Naive thymus-derived CD4-positive, alpha-beta T cell (primary cell): ENCODE measurements at regions of chr7 and their contacts with region 1.

Region 1: GRCh38 chr7:35037526-35038339 is 448 bp upstream of the DPY19L1 start:
- DNase-seq: peak; percentile 64 to 93 (median 81)
- ATAC-seq: peak; percentile 83
- H3K4me3 ChIP-seq: peak overlapping the region; percentile 68
- H3K4me3 Mint-ChIP-seq: peak overlapping the region; percentile 77 to 96 (median 89)
- H3K27ac ChIP-seq: peak overlapping the region; percentile 61
- H3K27ac Mint-ChIP-seq: peak overlapping the region; percentile 11 to 90 (median 73)
- H3K4me1 ChIP-seq: peaks cover 17% of the 10 kb centered on the region in 2 donors
- H3K4me1 Mint-ChIP-seq: peaks cover 19 to 38% (median 30%) of the 10 kb centered on the region in 7 donors
- H3K27me3 ChIP-seq: no peaks in the 10 kb centered on the region
- H3K27me3 Mint-ChIP-seq: peaks cover 0 to 21% (median 0%) of the 10 kb centered on the region in 5 donors

Region 2: DNA sequence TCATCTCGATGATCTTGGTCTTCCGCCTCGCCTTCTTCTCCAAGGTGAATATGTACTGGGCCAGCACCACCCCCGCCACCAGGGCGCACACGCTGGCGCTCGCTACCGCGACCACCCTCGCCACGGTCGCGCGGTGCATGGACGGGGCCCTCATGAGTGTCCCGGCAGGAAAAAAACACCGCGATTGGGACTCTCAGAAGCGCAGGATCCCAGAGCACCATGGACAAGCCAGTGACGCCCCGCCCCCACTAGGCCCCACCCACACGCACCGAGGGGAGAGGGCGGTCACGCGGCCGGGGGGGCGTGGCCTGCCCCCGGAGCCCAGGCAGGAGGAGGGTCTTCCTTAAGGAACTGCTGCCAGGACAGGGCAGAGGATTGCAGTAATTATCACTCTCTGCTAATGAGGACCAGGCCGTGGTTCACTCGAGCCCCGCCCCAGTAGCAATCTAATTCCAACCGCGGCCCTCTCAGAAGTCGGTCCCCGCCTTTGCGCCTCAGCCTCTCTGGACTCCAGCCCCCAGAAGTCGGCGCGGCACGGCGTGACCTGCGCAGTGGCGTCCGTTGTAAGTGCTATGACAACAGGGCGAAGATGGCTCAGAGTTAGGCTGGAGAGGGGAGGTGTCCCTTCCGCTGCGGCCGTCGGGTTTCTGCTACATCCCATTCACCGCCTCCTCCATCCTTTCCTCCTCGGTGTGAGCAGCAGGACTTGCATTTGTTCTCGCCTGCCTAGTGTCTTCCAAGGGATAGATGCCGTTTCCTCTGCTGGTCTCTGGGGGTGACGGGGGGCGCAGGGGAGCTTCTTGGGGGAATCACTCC is 1908.5 kb before region 1 on chr7 and contains the start of gene BBS9:
- CTCF ChIA-PET with region 1: no interaction called
- POLR2A ChIA-PET with region 1: no interaction called
- intact Hi-C with region 1: loop called (anchors 2 to 10 kb)
- DNase-seq: peak; percentile 83 to 90 (median 88)
- ATAC-seq: peak; percentile 97
- H3K4me3 ChIP-seq: peak within 1 kb of the TSS; percentile 80
- H3K4me3 Mint-ChIP-seq: peak within 1 kb of the TSS; percentile 94 to 99 (median 97)
- H3K27ac ChIP-seq: peak within 1 kb of the TSS; percentile 78
- H3K27ac Mint-ChIP-seq: peak within 1 kb of the TSS; percentile 84 to 97 (median 91)
- H3K4me1 ChIP-seq: peaks cover 6 to 9% of the 10 kb centered on the region in 2 donors
- H3K4me1 Mint-ChIP-seq: peaks cover 13 to 36% (median 25%) of the 10 kb centered on the region in 7 donors
- H3K27me3 ChIP-seq: no peaks in the 10 kb centered on the region
- H3K27me3 Mint-ChIP-seq: peaks cover 0 to 18% (median 0%) of the 10 kb centered on the region in 5 donors
- total RNA-seq, gene BBS9: 11.7 to 31.0 (median 28.3) TPM

Region 3: DNA sequence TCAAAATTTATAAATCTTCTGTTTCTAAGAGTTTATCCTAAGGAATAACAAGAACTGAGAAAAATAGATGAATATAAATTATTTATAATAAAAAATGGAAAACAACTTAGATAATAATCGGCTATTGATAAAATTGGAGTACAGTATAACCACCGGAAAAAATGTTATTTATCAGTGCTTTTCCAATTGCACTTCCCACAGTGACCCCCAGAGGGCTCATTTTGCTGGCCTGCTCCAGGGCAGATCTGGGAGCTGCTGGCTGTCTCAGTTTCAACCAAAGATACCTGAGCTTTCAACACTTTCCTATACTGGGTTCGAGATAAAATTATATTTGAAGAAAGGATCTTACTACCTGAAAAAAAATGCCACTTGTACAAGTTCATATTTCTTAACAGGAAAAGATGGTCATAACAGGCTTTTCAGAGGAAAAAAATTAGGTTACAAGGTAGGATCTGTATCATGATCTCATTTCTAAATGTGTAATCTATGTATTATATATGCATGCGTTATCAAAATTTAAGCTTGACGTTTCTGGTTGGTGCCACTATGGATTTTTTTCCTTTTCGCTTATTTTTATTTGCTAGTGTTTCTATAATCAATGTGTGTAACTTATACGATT is 214.0 kb before region 1 on chr7:
- CTCF ChIA-PET with region 1: interaction called, 8 read pairs
- POLR2A ChIA-PET with region 1: interaction called, 3 read pairs
- intact Hi-C with region 1: loop called in 1 of 2 experiments (anchors 1 kb)
- DNase-seq: peak in 7 of 9 donors; percentile 5 to 43 (median 38)
- ATAC-seq: peak; percentile 67
- H3K4me3 ChIP-seq: no peak overlapping the region
- H3K4me3 Mint-ChIP-seq: no peak overlapping the region
- H3K27ac ChIP-seq: no peak overlapping the region
- H3K27ac Mint-ChIP-seq: no peak overlapping the region
- H3K4me1 ChIP-seq: no peaks in the 10 kb centered on the region
- H3K4me1 Mint-ChIP-seq: peaks cover 0 to 2% (median 0%) of the 10 kb centered on the region in 7 donors
- H3K27me3 ChIP-seq: no peaks in the 10 kb centered on the region
- H3K27me3 Mint-ChIP-seq: peaks cover 0 to 10% (median 4%) of the 10 kb centered on the region in 5 donors

Region 4: DNA sequence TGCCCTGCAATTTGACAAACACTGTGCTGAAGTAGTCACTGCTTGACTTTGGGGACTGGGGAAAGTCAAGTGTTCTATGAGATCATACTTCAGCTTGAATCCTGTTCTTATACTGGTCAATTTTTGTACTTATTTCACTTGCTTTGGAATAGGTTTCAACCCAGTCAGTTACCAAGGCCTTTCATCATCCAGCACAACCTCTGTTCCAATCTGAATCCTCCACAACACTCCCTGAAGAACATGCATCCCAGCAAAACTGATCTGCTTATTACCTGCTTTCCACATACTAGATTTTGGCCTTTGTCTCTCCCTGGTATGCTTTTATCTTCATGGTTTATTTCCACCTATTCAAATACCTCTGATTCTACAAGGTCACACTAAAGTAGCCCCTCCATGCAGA is 30.0 kb before region 1 on chr7:
- CTCF ChIA-PET with region 1: no interaction called
- POLR2A ChIA-PET with region 1: no interaction called
- intact Hi-C with region 1: no loop called
- DNase-seq: no peak
- ATAC-seq: no peak
- H3K4me3 ChIP-seq: no peak overlapping the region
- H3K4me3 Mint-ChIP-seq: no peak overlapping the region
- H3K27ac ChIP-seq: no peak overlapping the region
- H3K27ac Mint-ChIP-seq: no peak overlapping the region
- H3K4me1 ChIP-seq: no peaks in the 10 kb centered on the region
- H3K4me1 Mint-ChIP-seq: no peaks in the 10 kb centered on the region
- H3K27me3 ChIP-seq: no peaks in the 10 kb centered on the region
- H3K27me3 Mint-ChIP-seq: no peaks in the 10 kb centered on the region

Region 5: GRCh38 chr7:35253710-35254495 is 216.2 kb after region 1 on chr7 and contains the start of gene TBX20:
- CTCF ChIA-PET with region 1: no interaction called
- POLR2A ChIA-PET with region 1: no interaction called
- intact Hi-C with region 1: loop called in 1 of 2 experiments (anchors 5 kb)
- DNase-seq: peak in 1 of 9 donors; percentile 44
- ATAC-seq: peak; percentile 42
- H3K4me3 ChIP-seq: peak within 1 kb of the TSS; percentile 6
- H3K4me3 Mint-ChIP-seq: peak within 1 kb of the TSS in 9 of 10 donors; percentile 45 to 74 (median 52)
- H3K27ac ChIP-seq: no peak within 1 kb of the TSS
- H3K27ac Mint-ChIP-seq: peak within 1 kb of the TSS in 1 of 9 donors; percentile 66
- H3K4me1 ChIP-seq: no peaks in the 10 kb centered on the region
- H3K4me1 Mint-ChIP-seq: peaks cover 0 to 22% (median 15%) of the 10 kb centered on the region in 7 donors
- H3K27me3 ChIP-seq: peaks cover 13 to 35% of the 10 kb centered on the region in 2 donors
- H3K27me3 Mint-ChIP-seq: peaks cover 80 to 90% (median 83%) of the 10 kb centered on the region in 5 donors
- total RNA-seq, gene TBX20: not detected

Region 6: GRCh38 chr7:35694781-35695472 is 657.2 kb after region 1 on chr7 and contains the start of gene HERPUD2:
- CTCF ChIA-PET with region 1: no interaction called
- POLR2A ChIA-PET with region 1: no interaction called
- intact Hi-C with region 1: loop called (anchors 1 to 5 kb)
- DNase-seq: peak; percentile 89 to 94 (median 93)
- ATAC-seq: peak; percentile 92
- H3K4me3 ChIP-seq: peak within 1 kb of the TSS; percentile 92
- H3K4me3 Mint-ChIP-seq: peak within 1 kb of the TSS; percentile 88 to 99 (median 97)
- H3K27ac ChIP-seq: peak within 1 kb of the TSS; percentile 98
- H3K27ac Mint-ChIP-seq: peak within 1 kb of the TSS; percentile 93 to 100 (median 98)
- H3K4me1 ChIP-seq: peaks cover 16 to 18% of the 10 kb centered on the region in 2 donors
- H3K4me1 Mint-ChIP-seq: peaks cover 47 to 62% (median 57%) of the 10 kb centered on the region in 7 donors
- H3K27me3 ChIP-seq: no peaks in the 10 kb centered on the region
- H3K27me3 Mint-ChIP-seq: no peaks in the 10 kb centered on the region
- total RNA-seq, gene HERPUD2: 38.1 to 92.6 (median 62.4) TPM

Region 7: DNA sequence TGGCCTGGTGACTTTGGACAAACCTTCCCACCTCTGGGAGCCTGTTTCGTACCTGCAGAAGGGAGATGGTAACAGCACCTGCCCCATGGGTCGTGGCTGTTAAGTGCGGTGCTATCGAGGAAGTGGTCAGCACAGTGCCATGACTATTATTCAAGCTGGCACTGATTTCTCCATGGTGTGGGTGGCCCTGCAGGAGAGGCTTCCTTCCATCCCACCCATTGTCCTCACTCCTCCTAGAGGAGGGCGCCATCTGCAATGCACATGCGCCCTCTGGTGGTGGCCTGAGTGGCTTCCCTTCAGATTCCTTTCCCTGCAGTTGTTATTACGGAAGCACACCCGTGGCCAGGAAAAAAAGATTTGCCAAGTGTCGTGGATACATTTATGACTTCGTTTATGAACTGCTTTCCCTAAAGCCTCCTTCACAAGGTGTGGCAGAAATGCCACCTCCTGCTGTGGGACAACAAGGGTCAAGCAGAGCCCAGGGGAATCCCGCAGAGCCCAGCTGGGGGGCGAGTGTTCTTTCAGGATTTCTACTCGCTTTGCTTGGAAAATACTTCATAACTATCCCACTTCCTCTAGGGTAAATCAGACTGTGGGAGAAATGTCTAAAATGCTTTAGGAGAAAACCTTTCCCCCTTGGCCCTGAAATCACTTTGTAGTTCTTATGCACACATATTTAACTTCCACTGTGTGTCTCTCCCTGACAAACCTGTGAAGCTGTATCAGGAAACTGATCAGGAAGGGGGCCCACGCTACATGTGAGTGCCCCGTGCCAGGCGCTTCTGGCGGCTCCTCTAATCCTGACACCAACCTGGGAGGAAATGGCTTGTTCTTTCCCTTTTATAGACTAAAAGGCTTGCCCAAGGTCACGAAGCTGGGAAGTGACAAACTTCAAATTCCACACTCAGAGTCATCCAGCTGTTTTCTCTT is 1253.9 kb after region 1 on chr7:
- CTCF ChIA-PET with region 1: no interaction called
- POLR2A ChIA-PET with region 1: no interaction called
- intact Hi-C with region 1: loop called in 1 of 2 experiments (anchors 2 kb)
- DNase-seq: peak; percentile 37 to 78 (median 68)
- ATAC-seq: peak; percentile 76
- H3K4me3 ChIP-seq: peak overlapping the region; percentile 38
- H3K4me3 Mint-ChIP-seq: peak overlapping the region; percentile 54 to 83 (median 73)
- H3K27ac ChIP-seq: no peak overlapping the region
- H3K27ac Mint-ChIP-seq: peak overlapping the region in 8 of 9 donors; percentile 3 to 83 (median 50)
- H3K4me1 ChIP-seq: peaks cover 26% of the 10 kb centered on the region in 2 donors
- H3K4me1 Mint-ChIP-seq: peaks cover 29 to 47% (median 40%) of the 10 kb centered on the region in 7 donors
- H3K27me3 ChIP-seq: no peaks in the 10 kb centered on the region
- H3K27me3 Mint-ChIP-seq: no peaks in the 10 kb centered on the region

Region 8: GRCh38 chr7:36389371-36390198 is 1351.9 kb after region 1 on chr7 and contains the start of gene ANLN:
- CTCF ChIA-PET with region 1: no interaction called
- POLR2A ChIA-PET with region 1: no interaction called
- intact Hi-C with region 1: loop called in 1 of 2 experiments (anchors 5 kb)
- DNase-seq: peak; percentile 71 to 91 (median 82)
- ATAC-seq: peak; percentile 98
- H3K4me3 ChIP-seq: peak within 1 kb of the TSS; percentile 78
- H3K4me3 Mint-ChIP-seq: peak within 1 kb of the TSS; percentile 77 to 90 (median 85)
- H3K27ac ChIP-seq: peak within 1 kb of the TSS; percentile 67
- H3K27ac Mint-ChIP-seq: peak within 1 kb of the TSS; percentile 72 to 90 (median 81)
- H3K4me1 ChIP-seq: peaks cover 8 to 19% of the 10 kb centered on the region in 2 donors
- H3K4me1 Mint-ChIP-seq: peaks cover 12 to 39% (median 26%) of the 10 kb centered on the region in 7 donors
- H3K27me3 ChIP-seq: no peaks in the 10 kb centered on the region
- H3K27me3 Mint-ChIP-seq: peaks cover 0 to 12% (median 0%) of the 10 kb centered on the region in 5 donors
- total RNA-seq, gene ANLN: 0.35 to 48.6 (median 0.82) TPM